Activated naive CD4-positive, alpha-beta T cell treated with anti-CD3 and anti-CD28 coated beads for 36 hours (primary cell): ENCODE measurements at regions of chr2 and their contacts with region 1.

Region 1: GRCh38 chr2:27281855-27282559 is at the start of gene TRIM54:
- DNase-seq: no peak
- H3K4me3 Mint-ChIP-seq: no peak within 1 kb of the TSS
- H3K27ac Mint-ChIP-seq: no peak within 1 kb of the TSS
- H3K4me1 Mint-ChIP-seq: peaks cover 2% of the 10 kb centered on the region
- H3K27me3 Mint-ChIP-seq: peaks cover 2% of the 10 kb centered on the region
- total RNA-seq, gene TRIM54: not detected

Region 2: DNA sequence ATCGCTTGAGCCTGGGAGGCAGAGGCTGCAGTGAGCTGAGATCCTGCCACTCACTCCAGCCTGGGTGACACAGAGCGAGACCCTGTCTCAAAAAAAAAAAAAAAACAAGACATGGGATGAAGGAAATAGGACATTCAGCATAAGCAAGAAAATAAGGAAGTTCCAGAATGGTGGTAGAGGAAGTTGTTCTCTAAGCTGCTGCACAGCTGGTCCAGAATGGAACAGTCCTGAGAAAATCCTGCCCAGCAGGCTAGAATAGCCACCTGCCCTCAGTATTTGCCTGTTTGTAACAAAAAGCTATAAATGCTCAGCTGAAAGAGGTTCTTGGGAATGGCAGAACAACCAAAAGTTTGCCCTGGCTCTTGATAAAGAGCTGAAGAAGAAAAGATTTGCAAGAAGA is 322.7 kb before region 1 on chr2:
- CTCF ChIA-PET with region 1: interaction called, 17 read pairs
- intact Hi-C with region 1: loop called (anchors 1 kb)
- DNase-seq: no peak
- H3K4me3 Mint-ChIP-seq: no peak overlapping the region
- H3K27ac Mint-ChIP-seq: no peak overlapping the region
- H3K4me1 Mint-ChIP-seq: no peaks in the 10 kb centered on the region
- H3K27me3 Mint-ChIP-seq: peaks cover 12% of the 10 kb centered on the region

Region 3: DNA sequence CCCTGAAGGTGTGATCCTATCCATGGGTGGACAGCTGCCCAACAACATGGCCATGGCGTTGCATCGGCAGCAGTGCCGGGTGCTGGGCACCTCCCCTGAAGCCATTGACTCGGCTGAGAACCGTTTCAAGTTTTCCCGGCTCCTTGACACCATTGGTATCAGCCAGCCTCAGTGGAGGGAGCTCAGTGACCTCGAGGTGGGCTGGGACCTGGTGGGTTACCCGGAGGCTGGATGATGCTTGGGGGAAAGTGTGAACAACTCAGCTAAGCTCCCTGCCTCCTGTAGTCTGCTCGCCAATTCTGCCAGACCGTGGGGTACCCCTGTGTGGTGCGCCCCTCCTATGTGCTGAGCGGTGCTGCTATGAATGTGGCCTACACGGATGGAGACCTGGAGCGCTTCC is 48.7 kb before region 1 on chr2:
- CTCF ChIA-PET with region 1: interaction called, 14 read pairs
- intact Hi-C with region 1: no loop called
- DNase-seq: no peak
- H3K4me3 Mint-ChIP-seq: no peak overlapping the region
- H3K27ac Mint-ChIP-seq: no peak overlapping the region
- H3K4me1 Mint-ChIP-seq: no peaks in the 10 kb centered on the region
- H3K27me3 Mint-ChIP-seq: no peaks in the 10 kb centered on the region

Region 4: DNA sequence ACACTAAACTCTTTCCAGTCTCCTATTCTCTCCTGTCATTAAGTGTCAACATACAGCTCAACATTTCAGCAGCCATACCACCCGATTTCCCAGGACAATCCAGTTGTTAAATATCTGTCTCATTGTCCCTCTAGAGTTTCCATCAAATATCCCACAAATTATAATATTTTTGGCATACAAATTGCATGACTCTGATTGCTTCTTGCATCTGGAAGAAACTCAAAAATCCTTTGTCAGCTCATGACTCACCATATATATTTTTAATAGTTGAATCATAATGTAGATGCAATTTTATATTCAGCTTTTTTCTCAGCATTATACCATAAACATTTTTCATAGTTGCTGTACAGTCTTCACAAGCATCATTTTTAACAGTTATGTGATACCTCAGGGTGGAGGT is 26.3 kb before region 1 on chr2:
- CTCF ChIA-PET with region 1: interaction called, 68 read pairs
- intact Hi-C with region 1: loop called (anchors 1 kb)
- DNase-seq: no peak
- H3K4me3 Mint-ChIP-seq: no peak overlapping the region
- H3K27ac Mint-ChIP-seq: no peak overlapping the region
- H3K4me1 Mint-ChIP-seq: no peaks in the 10 kb centered on the region
- H3K27me3 Mint-ChIP-seq: peaks cover 42% of the 10 kb centered on the region

Region 5: DNA sequence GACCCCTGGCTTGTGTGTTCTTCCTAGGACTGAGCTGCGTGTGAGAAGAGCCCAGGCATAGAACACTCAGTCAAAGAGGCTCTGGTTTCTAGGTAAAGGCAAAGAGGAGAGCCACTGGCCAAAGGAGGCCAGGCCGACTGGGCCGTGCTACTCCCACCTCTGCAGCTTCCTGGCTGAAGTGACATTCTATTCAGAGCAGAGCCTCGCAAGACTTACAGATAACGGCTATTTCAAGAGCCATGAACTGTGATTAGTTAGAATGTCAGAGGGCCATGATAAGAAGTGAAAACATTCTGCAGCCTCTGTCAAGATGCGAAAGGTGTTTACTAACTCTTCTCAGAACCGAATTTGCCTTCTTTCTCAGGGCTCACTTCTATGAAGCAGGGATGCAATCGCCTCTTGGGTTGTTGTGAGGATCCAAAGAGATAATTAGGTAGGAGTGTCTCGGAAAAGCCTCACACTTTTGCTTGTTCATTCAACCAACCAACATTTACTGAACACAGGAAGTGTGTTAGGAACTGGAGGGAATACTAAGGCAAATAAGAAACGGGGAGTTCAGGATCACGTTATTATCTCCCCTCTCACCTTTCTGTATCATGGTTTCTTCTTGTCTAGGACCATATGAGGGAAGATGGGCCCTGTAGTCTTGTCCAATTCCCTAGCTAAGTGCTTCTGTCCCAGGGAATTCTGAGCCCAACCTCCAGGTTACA is 10.2 kb before region 1 on chr2:
- CTCF ChIA-PET with region 1: interaction called, 44 read pairs
- intact Hi-C with region 1: no loop called
- DNase-seq: no peak
- H3K4me3 Mint-ChIP-seq: no peak overlapping the region
- H3K27ac Mint-ChIP-seq: no peak overlapping the region
- H3K4me1 Mint-ChIP-seq: no peaks in the 10 kb centered on the region
- H3K27me3 Mint-ChIP-seq: peaks cover 3% of the 10 kb centered on the region

Region 6: GRCh38 chr2:27400348-27401135 is 118.5 kb after region 1 on chr2:
- CTCF ChIA-PET with region 1: no interaction called
- intact Hi-C with region 1: no loop called
- DNase-seq: no peak
- H3K4me3 Mint-ChIP-seq: no peak overlapping the region
- H3K27ac Mint-ChIP-seq: no peak overlapping the region
- H3K4me1 Mint-ChIP-seq: peaks cover 46% of the 10 kb centered on the region
- H3K27me3 Mint-ChIP-seq: no peaks in the 10 kb centered on the region